ENCODE measurements at regions of chr12 and their contacts with region 1.

Region 1: GRCh38 chr12:130589540-130590317 is 126.4 kb downstream of the RIMBP2 start:
- DNase-seq: no peak
- H3K4me3 ChIP-seq: no peak overlapping the region
- H3K27ac ChIP-seq: no peak overlapping the region
- H3K4me1 ChIP-seq: no peaks in the 10 kb centered on the region
- H3K27me3 ChIP-seq: no peaks in the 10 kb centered on the region
- CTCF ChIP-seq: no peak

Region 2: GRCh38 chr12:130222519-130223218 is 367.1 kb before region 1 on chr12:
- CTCF ChIA-PET with region 1: no interaction called
- dilution Hi-C with region 1: no loop called
- in situ Hi-C with region 1: no loop called
- intact Hi-C with region 1: no loop called
- DNase-seq: no peak
- H3K4me3 ChIP-seq: no peak overlapping the region
- H3K27ac ChIP-seq: no peak overlapping the region
- H3K4me1 ChIP-seq: no peaks in the 10 kb centered on the region
- H3K27me3 ChIP-seq: no peaks in the 10 kb centered on the region
- CTCF ChIP-seq: no peak

Region 3: GRCh38 chr12:130335517-130336392 is 254.0 kb before region 1 on chr12:
- CTCF ChIA-PET with region 1: no interaction called
- dilution Hi-C with region 1: no loop called
- in situ Hi-C with region 1: no loop called
- intact Hi-C with region 1: no loop called
- DNase-seq: peak; percentile 16
- H3K4me3 ChIP-seq: no peak overlapping the region
- H3K27ac ChIP-seq: no peak overlapping the region
- H3K4me1 ChIP-seq: no peaks in the 10 kb centered on the region
- H3K27me3 ChIP-seq: no peaks in the 10 kb centered on the region
- CTCF ChIP-seq: peak; percentile 48 to 61

Region 4: DNA sequence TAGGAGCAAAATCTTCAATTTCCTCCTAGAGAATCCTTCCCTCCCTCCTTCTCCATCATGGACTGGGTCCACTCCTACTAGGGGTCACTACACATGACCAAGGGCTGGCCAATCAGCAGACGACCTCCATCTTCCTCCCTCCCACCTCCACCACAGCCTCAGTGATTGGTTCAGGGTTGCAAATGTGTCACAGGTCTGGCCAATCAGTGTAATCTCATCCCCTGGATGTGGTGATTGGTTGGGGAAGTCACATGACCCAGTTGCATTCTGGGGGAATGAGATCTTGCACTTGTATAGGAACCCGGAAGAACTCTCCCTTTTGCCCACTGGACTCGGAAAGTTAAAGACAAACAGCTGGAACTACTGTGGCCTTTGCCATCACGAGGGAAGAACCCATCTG is 82.9 kb before region 1 on chr12:
- CTCF ChIA-PET with region 1: no interaction called
- dilution Hi-C with region 1: no loop called
- in situ Hi-C with region 1: no loop called
- intact Hi-C with region 1: no loop called
- DNase-seq: no peak
- H3K4me3 ChIP-seq: no peak overlapping the region
- H3K27ac ChIP-seq: no peak overlapping the region
- H3K4me1 ChIP-seq: no peaks in the 10 kb centered on the region
- H3K27me3 ChIP-seq: no peaks in the 10 kb centered on the region
- CTCF ChIP-seq: no peak

Region 5: DNA sequence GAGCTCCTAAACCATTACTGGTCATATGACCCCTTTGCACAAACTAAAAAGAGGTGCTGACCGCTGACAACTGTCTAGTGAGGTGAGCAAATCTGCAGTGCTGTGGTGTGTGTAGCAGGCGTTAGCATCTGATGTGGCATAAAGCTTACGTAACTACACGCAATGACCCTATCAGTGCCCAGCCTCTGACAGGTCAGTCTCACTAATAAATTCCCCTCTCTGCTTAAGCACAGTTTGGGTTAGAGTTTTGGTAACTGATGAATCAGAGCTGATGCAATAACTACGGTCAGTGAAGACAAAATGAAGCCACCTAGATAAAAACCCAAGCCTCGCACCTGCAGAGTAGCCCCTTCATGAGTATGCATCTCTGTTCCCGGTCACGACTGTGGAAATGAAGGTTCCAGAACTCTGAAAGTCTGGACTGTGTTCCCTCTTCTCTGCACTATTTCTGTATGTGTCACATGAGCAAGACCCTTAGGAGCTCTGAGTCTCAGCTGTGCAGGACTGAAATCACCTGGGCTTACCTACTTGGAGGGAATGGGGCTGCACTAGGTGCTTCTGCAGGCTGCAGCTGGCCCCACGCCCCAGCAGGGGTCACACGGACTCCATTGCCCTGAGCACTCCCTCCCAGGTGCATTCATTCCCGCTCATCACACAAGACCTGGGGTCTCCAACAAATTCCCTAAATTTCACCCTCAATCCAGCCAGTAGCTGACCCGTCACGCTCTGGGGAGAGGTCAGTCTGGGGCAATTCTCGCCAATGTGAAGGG is 71.9 kb after region 1 on chr12:
- CTCF ChIA-PET with region 1: no interaction called
- dilution Hi-C with region 1: loop called (anchors 5 kb)
- in situ Hi-C with region 1: no loop called
- intact Hi-C with region 1: no loop called
- DNase-seq: no peak
- H3K4me3 ChIP-seq: no peak overlapping the region
- H3K27ac ChIP-seq: no peak overlapping the region
- H3K4me1 ChIP-seq: no peaks in the 10 kb centered on the region
- H3K27me3 ChIP-seq: no peaks in the 10 kb centered on the region
- CTCF ChIP-seq: no peak